ENCODE measurements at regions of chr1 and their contacts with region 1.

Region 1: GRCh38 chr1:207997486-207998268 is 86.8 kb upstream of the CD34 start:
- DNase-seq: peak; percentile 69 to 81
- ATAC-seq: peak; percentile 87 to 97; a peak in 5 of 6 replicates
- H3K4me3 ChIP-seq: no peak overlapping the region
- H3K27ac ChIP-seq: no peak overlapping the region
- H3K4me1 ChIP-seq: no peaks in the 10 kb centered on the region
- CTCF ChIP-seq: peak; percentile 73
- EP300 ChIP-seq: no peak
- POLR2A ChIP-seq: no peak
- RAD21 ChIP-seq: peak in 1 of 2 experiments; percentile 31; a peak in 3 of 5 replicates

Region 2: GRCh38 chr1:208007938-208008342 is 10.3 kb after region 1 on chr1:
- CTCF ChIA-PET with region 1: interaction called, 32 read pairs
- POLR2A ChIA-PET with region 1: no interaction called
- DNase-seq: peak in 1 of 2 experiments; percentile 12
- ATAC-seq: no peak; a peak in 2 of 6 replicates
- H3K4me3 ChIP-seq: no peak overlapping the region
- H3K27ac ChIP-seq: no peak overlapping the region
- H3K4me1 ChIP-seq: peaks cover 9% of the 10 kb centered on the region
- CTCF ChIP-seq: no peak
- EP300 ChIP-seq: no peak
- POLR2A ChIP-seq: no peak
- RAD21 ChIP-seq: no peak

Region 3: GRCh38 chr1:208024406-208024805 is 26.7 kb after region 1 on chr1:
- CTCF ChIA-PET with region 1: interaction called, 23 read pairs
- POLR2A ChIA-PET with region 1: no interaction called
- DNase-seq: no peak
- ATAC-seq: no peak
- H3K4me3 ChIP-seq: no peak overlapping the region
- H3K27ac ChIP-seq: no peak overlapping the region
- H3K4me1 ChIP-seq: no peaks in the 10 kb centered on the region
- CTCF ChIP-seq: no peak
- EP300 ChIP-seq: no peak
- POLR2A ChIP-seq: no peak
- RAD21 ChIP-seq: no peak

Measured in A549 (cell line).